Dendritic cell treated with granulocyte-macrophage colony-stimulating factor and Interleukin-4, amounts not matched to agents 40 ng/mL and 50 ng/mL, for 4 days (primary cell): ENCODE measurements at regions of chr4 and their contacts with region 1.

Region 1: GRCh38 chr4:112765317-112765975 is 128.5 kb downstream of the LARP7 start:
- H3K4me3 Mint-ChIP-seq: no peak overlapping the region
- H3K27ac Mint-ChIP-seq: no peak overlapping the region
- H3K4me1 Mint-ChIP-seq: peaks cover 5% of the 10 kb centered on the region
- H3K27me3 Mint-ChIP-seq: no peaks in the 10 kb centered on the region

Region 2: GRCh38 chr4:112636688-112637551 is 128.5 kb before region 1 on chr4 and contains the starts of genes LARP7 and ZGRF1:
- intact Hi-C with region 1: loop called (anchors 2 kb)
- H3K4me3 Mint-ChIP-seq: no peak within 1 kb of the TSS
- H3K27ac Mint-ChIP-seq: no peak within 1 kb of the TSS
- H3K4me1 Mint-ChIP-seq: peaks cover 20% of the 10 kb centered on the region
- H3K27me3 Mint-ChIP-seq: no peaks in the 10 kb centered on the region

Region 3: GRCh38 chr4:113636438-113636818 is 871.0 kb after region 1 on chr4:
- intact Hi-C with region 1: no loop called
- H3K4me3 Mint-ChIP-seq: no peak overlapping the region
- H3K27ac Mint-ChIP-seq: no peak overlapping the region
- H3K4me1 Mint-ChIP-seq: peaks cover 24% of the 10 kb centered on the region
- H3K27me3 Mint-ChIP-seq: no peaks in the 10 kb centered on the region